Activated CD4-positive, alpha-beta T cell treated with anti-CD3 and anti-CD28 coated beads for 36 hours (primary cell): ENCODE measurements at regions of chr1 and their contacts with region 1.

Region 1: DNA sequence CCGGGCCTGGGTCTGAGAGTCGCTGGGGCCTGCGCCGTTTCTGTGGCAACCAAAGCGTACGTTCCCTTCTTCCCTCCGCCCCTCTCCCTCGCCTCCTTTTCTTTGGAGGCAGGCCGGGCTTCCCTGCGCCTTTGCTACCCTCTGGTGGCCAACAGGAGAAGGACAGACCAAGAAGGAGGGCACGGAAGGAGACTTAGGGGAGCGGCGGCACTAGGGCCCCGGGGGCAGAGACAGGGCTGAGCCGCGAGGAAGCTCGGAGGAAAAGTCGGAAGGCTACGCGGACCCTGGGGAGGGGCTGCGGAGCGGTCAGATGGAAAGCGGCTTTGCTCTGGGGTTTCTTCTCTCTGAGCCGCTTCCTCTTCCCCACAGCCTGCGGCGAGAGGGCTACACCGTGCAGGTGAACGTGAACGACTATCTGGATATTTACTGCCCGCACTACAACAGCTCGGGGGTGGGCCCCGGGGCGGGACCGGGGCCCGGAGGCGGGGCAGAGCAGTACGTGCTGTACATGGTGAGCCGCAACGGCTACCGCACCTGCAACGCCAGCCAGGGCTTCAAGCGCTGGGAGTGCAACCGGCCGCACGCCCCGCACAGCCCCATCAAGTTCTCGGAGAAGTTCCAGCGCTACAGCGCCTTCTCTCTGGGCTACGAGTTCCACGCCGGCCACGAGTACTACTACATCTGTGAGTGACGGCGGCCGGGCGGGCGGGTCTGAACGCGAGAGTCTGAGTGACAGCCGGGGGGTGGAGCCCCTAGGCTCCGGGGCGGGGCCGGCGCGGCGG is 6.3 kb downstream of the EFNA3 start:
- DNase-seq: peak; percentile 97
- ATAC-seq: peak; percentile 78
- H3K4me3 Mint-ChIP-seq: peak overlapping the region; percentile 82
- H3K27ac Mint-ChIP-seq: peak overlapping the region; percentile 91
- H3K4me1 Mint-ChIP-seq: peaks cover 36% of the 10 kb centered on the region
- H3K27me3 Mint-ChIP-seq: peaks cover 27% of the 10 kb centered on the region

Region 2: DNA sequence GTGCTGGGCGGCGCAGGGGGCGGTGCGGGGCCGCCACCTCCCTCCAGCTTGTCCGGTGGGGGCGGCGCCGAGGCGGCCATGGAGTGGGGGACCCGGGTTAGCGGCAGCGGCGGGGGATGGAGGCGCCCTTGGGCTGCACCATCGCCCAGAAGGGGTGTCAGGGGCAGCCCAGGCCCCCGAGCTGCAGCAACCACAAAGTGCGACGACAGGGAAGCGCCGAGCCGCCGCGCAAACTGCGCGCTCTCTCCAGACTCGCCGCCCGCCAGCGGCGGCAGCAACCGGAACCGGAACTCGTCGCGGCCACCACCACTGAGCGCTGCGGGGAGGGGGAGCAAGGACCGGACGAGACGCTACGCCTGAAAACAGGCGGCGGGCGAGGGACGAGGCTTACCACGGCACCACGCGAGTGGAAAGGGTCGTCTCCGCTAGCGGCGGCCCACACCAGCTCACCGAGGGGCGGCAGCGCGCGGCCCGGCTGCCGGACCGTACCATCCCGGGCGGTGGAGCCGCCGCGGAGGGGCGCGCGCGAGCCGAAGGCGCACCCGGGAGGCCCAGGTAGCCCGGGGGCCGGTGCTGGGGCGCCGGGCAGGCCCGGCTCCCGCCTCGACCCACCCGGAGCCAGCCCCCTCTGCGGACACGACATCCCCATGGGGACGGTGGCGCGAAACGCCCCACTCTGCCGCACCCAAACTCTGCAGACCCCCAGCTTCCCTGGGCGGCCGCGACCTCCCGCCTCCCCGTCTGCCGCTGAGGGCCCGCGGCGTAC is 123.2 kb before region 1 on chr1 and contains the start of gene PYGO2:
- CTCF ChIA-PET with region 1: interaction called, 7 read pairs
- POLR2A ChIA-PET with region 1: no interaction called
- intact Hi-C with region 1: loop called in 1 of 2 experiments (anchors 2 kb)
- DNase-seq: peak; percentile 90
- ATAC-seq: peak; percentile 81
- H3K4me3 Mint-ChIP-seq: peak within 1 kb of the TSS; percentile 91
- H3K27ac Mint-ChIP-seq: peak within 1 kb of the TSS; percentile 93
- H3K4me1 Mint-ChIP-seq: peaks cover 43% of the 10 kb centered on the region
- H3K27me3 Mint-ChIP-seq: no peaks in the 10 kb centered on the region
- total RNA-seq, gene PYGO2: 24.5 to 25.6 TPM

Region 3: DNA sequence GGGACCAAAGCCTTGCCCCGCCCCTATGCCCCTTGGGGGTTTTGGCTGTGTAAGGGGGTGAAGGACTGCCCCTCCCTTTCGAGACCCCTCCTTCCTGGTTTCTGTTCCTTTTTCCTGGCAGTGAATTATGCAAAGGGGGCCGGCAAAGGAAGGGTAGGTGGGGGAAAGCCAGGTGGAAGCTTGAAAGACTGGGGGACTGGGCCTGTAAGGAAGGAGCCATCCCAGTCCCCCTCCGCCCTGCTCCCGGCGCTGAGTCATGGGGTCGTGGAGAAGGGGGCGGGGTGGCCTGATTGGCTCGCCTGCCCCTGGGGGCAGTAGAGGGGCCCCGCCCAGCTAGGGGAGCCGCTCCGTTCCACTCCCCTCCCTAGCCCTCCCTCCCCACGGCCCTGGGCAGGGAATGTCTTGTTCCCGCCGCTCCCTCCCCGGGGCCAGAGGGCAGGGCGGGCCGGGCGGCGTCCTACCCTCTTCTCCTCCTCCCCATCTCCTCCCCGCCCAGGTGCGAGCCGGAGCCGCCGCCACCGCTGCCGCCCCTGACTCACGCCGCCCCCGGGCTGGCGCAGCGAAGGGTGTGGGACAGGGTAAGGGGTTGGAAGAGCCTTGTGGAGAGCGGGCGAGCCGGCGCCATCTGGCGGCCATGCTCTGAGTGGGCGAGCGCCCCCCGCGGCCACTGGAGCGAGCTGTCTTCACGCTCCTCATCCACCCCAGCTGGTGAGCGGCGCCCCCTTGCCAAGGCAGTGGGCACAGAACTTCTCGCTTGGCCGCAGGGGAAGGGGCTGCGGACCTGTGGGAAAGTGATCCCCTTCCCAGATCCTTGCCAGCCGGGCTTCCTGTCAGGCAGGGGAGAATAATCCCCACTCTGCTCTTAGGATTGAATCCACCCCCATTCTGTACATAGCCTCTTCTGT is 67.6 kb before region 1 on chr1:
- CTCF ChIA-PET with region 1: interaction called, 4 read pairs
- POLR2A ChIA-PET with region 1: no interaction called
- intact Hi-C with region 1: loop called in 1 of 2 experiments (anchors 1 kb)
- DNase-seq: peak; percentile 97
- ATAC-seq: peak; percentile 87
- H3K4me3 Mint-ChIP-seq: peak overlapping the region; percentile 53
- H3K27ac Mint-ChIP-seq: peak overlapping the region; percentile 69
- H3K4me1 Mint-ChIP-seq: peaks cover 69% of the 10 kb centered on the region
- H3K27me3 Mint-ChIP-seq: no peaks in the 10 kb centered on the region

Region 4: GRCh38 chr1:155050560-155051341 is 34.2 kb before region 1 on chr1 and contains the start of gene ADAM15:
- CTCF ChIA-PET with region 1: interaction called, 15 read pairs
- POLR2A ChIA-PET with region 1: interaction called, 3 read pairs
- intact Hi-C with region 1: loop called (anchors 1 kb)
- DNase-seq: peak; percentile 90
- ATAC-seq: peak; percentile 78
- H3K4me3 Mint-ChIP-seq: peak within 1 kb of the TSS; percentile 74
- H3K27ac Mint-ChIP-seq: peak within 1 kb of the TSS; percentile 80
- H3K4me1 Mint-ChIP-seq: peaks cover 20% of the 10 kb centered on the region
- H3K27me3 Mint-ChIP-seq: no peaks in the 10 kb centered on the region
- total RNA-seq, gene ADAM15: 42.4 to 48.8 TPM

Region 5: DNA sequence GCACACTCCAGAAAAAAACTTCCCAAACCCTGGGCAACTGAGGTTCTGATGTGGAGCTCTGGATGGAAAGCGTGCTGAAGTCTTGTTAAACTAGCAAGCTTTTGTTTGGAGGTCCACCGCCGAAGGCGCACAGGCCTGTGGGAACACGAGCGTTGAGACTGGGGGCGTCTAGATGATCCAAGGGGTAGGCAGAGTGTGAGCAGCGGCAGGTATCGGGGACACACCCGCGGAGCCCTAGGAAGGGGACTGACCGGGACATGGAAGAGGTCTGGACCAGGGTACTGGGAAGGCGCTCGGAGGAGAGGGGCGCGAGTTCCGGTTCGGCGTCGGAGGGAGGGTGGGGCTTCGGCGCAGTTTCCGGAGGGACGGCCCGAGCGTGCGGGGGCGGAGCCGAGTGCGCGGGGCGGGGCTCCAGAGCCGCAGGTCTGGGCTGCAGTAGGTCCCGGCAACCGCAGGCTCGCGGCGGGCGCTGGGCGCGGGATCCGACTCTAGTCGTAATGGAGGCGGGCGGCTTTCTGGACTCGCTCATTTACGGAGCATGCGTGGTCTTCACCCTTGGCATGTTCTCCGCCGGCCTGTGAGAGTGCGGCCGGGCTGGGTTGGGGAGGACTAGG is 50.6 kb after region 1 on chr1 and contains the start of gene SLC50A1:
- CTCF ChIA-PET with region 1: interaction called, 10 read pairs
- POLR2A ChIA-PET with region 1: no interaction called
- intact Hi-C with region 1: loop called (anchors 1 to 2 kb)
- DNase-seq: peak; percentile 97
- ATAC-seq: peak; percentile 78
- H3K4me3 Mint-ChIP-seq: peak within 1 kb of the TSS; percentile 96
- H3K27ac Mint-ChIP-seq: peak within 1 kb of the TSS; percentile 97
- H3K4me1 Mint-ChIP-seq: peaks cover 35% of the 10 kb centered on the region
- H3K27me3 Mint-ChIP-seq: no peaks in the 10 kb centered on the region
- total RNA-seq, gene SLC50A1: 50.2 to 58.0 TPM

Region 6: GRCh38 chr1:155172732-155173477 is 88.0 kb after region 1 on chr1 and contains the start of gene KRTCAP2:
- CTCF ChIA-PET with region 1: interaction called, 72 read pairs
- POLR2A ChIA-PET with region 1: no interaction called
- intact Hi-C with region 1: loop called (anchors 2 kb)
- DNase-seq: peak; percentile 97
- ATAC-seq: peak; percentile 83
- H3K4me3 Mint-ChIP-seq: peak within 1 kb of the TSS; percentile 98
- H3K27ac Mint-ChIP-seq: peak within 1 kb of the TSS; percentile 96
- H3K4me1 Mint-ChIP-seq: peaks cover 52% of the 10 kb centered on the region
- H3K27me3 Mint-ChIP-seq: no peaks in the 10 kb centered on the region
- total RNA-seq, gene KRTCAP2: 125 to 300 TPM

Region 7: GRCh38 chr1:155227261-155228095 is 142.6 kb after region 1 on chr1:
- CTCF ChIA-PET with region 1: interaction called, 3 read pairs
- POLR2A ChIA-PET with region 1: no interaction called
- intact Hi-C with region 1: loop called in 1 of 2 experiments (anchors 1 kb)
- DNase-seq: peak; percentile 99
- ATAC-seq: peak; percentile 98
- H3K4me3 Mint-ChIP-seq: peak overlapping the region; percentile 96
- H3K27ac Mint-ChIP-seq: peak overlapping the region; percentile 97
- H3K4me1 Mint-ChIP-seq: peaks cover 27% of the 10 kb centered on the region
- H3K27me3 Mint-ChIP-seq: no peaks in the 10 kb centered on the region